Caco-2 (cell line): ENCODE measurements at regions of chr3 and their contacts with region 1.

Region 1: GRCh38 chr3:193351426-193351825 is 27.1 kb downstream of the ATP13A5 start:
- DNase-seq: no peak
- H3K4me3 ChIP-seq: no peak overlapping the region
- H3K4me3 Mint-ChIP-seq: no peak overlapping the region
- H3K27ac Mint-ChIP-seq: no peak overlapping the region
- H3K4me1 ChIP-seq: peaks cover 40% of the 10 kb centered on the region
- H3K4me1 Mint-ChIP-seq: peaks cover 19% of the 10 kb centered on the region
- H3K27me3 ChIP-seq: no peaks in the 10 kb centered on the region
- H3K27me3 Mint-ChIP-seq: no peaks in the 10 kb centered on the region
- CTCF ChIP-seq: no peak

Region 2: GRCh38 chr3:193129601-193130000 is 221.8 kb before region 1 on chr3:
- CTCF ChIA-PET with region 1: no interaction called
- POLR2A ChIA-PET with region 1: no interaction called
- intact Hi-C with region 1: no loop called
- DNase-seq: peak in 1 of 2 experiments; percentile 20
- H3K4me3 ChIP-seq: no peak overlapping the region
- H3K4me3 Mint-ChIP-seq: no peak overlapping the region
- H3K27ac Mint-ChIP-seq: no peak overlapping the region
- H3K4me1 ChIP-seq: no peaks in the 10 kb centered on the region
- H3K4me1 Mint-ChIP-seq: no peaks in the 10 kb centered on the region
- H3K27me3 ChIP-seq: no peaks in the 10 kb centered on the region
- H3K27me3 Mint-ChIP-seq: peaks cover 29% of the 10 kb centered on the region
- CTCF ChIP-seq: peak; percentile 12 to 36

Region 3: GRCh38 chr3:193407112-193407511 is 55.7 kb after region 1 on chr3:
- CTCF ChIA-PET with region 1: no interaction called
- POLR2A ChIA-PET with region 1: no interaction called
- intact Hi-C with region 1: loop called (anchors 2 kb)
- DNase-seq: no peak
- H3K4me3 ChIP-seq: no peak overlapping the region
- H3K4me3 Mint-ChIP-seq: no peak overlapping the region
- H3K27ac Mint-ChIP-seq: no peak overlapping the region
- H3K4me1 ChIP-seq: no peaks in the 10 kb centered on the region
- H3K4me1 Mint-ChIP-seq: no peaks in the 10 kb centered on the region
- H3K27me3 ChIP-seq: no peaks in the 10 kb centered on the region
- H3K27me3 Mint-ChIP-seq: no peaks in the 10 kb centered on the region
- CTCF ChIP-seq: no peak